ENCODE measurements at regions of chr3 and their contacts with region 1.

Region 1: DNA sequence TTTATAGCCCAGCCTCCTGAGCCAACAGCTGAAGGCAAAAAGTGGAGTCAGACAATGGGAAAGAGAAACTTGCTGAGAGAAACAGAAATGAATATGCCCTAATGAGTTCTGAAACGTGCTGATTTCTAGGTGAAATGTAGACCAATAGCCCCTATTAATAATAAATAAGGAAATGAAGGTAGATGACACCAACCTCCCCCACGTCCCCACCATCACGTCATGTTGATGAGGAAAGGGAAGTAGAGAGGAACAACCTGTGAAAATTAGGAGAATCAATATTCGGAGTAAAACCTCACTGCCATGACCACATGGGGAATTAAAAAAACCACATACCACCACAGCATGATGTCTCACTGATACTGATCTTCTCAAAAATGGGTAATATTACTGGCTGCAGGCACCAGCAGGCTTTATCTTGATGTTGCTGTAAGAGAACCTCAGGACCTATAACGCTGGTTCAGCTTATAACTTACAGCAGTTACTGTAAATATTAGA is 64.0 kb downstream of the KAT2B start:
- DNase-seq: peak; percentile 86
- H3K4me3 Mint-ChIP-seq: peak overlapping the region; percentile 67
- H3K27ac Mint-ChIP-seq: peak overlapping the region; percentile 86
- H3K4me1 Mint-ChIP-seq: peaks cover 57% of the 10 kb centered on the region
- H3K27me3 Mint-ChIP-seq: no peaks in the 10 kb centered on the region

Region 2: GRCh38 chr3:19885468-19885867 is 218.7 kb before region 1 on chr3:
- intact Hi-C with region 1: loop called (anchors 5 kb)
- DNase-seq: peak; percentile 63
- H3K4me3 Mint-ChIP-seq: no peak overlapping the region
- H3K27ac Mint-ChIP-seq: no peak overlapping the region
- H3K4me1 Mint-ChIP-seq: peaks cover 6% of the 10 kb centered on the region
- H3K27me3 Mint-ChIP-seq: no peaks in the 10 kb centered on the region

Region 3: DNA sequence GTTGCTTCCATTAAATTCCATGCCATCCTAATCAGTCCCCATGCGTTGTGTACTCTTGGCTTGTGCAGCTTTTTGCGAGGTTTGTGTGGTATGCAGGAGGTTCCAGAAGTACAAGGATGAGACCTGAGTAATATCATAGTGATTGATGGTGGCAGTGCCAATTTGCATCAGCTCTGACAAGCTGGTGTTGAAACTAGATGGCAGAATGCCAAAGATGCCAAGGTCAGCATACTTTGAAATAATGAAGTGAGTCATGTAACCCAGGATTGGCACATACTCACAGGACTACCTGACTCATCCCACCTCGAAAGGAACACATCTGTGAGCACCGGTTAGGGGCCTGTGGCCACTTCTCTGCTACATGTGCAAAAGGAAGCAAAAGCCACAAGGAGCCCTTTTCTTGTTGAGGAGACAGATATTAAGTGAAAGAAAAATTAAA is 49.6 kb before region 1 on chr3:
- intact Hi-C with region 1: loop called (anchors 1 kb)
- DNase-seq: peak; percentile 84
- H3K4me3 Mint-ChIP-seq: no peak overlapping the region
- H3K27ac Mint-ChIP-seq: no peak overlapping the region
- H3K4me1 Mint-ChIP-seq: peaks cover 30% of the 10 kb centered on the region
- H3K27me3 Mint-ChIP-seq: no peaks in the 10 kb centered on the region

Region 4: GRCh38 chr3:20424086-20424485 is 319.9 kb after region 1 on chr3:
- intact Hi-C with region 1: no loop called
- DNase-seq: no peak
- H3K4me3 Mint-ChIP-seq: no peak overlapping the region
- H3K27ac Mint-ChIP-seq: no peak overlapping the region
- H3K4me1 Mint-ChIP-seq: no peaks in the 10 kb centered on the region
- H3K27me3 Mint-ChIP-seq: no peaks in the 10 kb centered on the region